HepG2 (cell line): ENCODE measurements at regions of chr6 and their contacts with region 1.

Region 1: GRCh38 chr6:8707956-8708772 is 272.8 kb upstream of the SLC35B3 start:
- DNase-seq: peak; percentile 27
- ATAC-seq: peak; percentile 71
- H3K4me3 ChIP-seq: no peak overlapping the region
- H3K27ac ChIP-seq: no peak overlapping the region
- H3K4me1 ChIP-seq: no peaks in the 10 kb centered on the region
- H3K27me3 ChIP-seq: no peaks in the 10 kb centered on the region; a peak in 1 of 5 replicates
- CTCF ChIP-seq: peak; percentile 46
- EP300 ChIP-seq: no peak
- POLR2A ChIP-seq: no peak
- RAD21 ChIP-seq: no peak

Region 2: GRCh38 chr6:8539446-8539845 is 168.7 kb before region 1 on chr6:
- CTCF ChIA-PET with region 1: no interaction called
- POLR2A ChIA-PET with region 1: no interaction called
- in situ Hi-C with region 1: no loop called
- intact Hi-C with region 1: loop called (anchors 1 kb)
- DNase-seq: peak; percentile 28
- ATAC-seq: peak; percentile 75
- H3K4me3 ChIP-seq: no peak overlapping the region
- H3K27ac ChIP-seq: no peak overlapping the region
- H3K4me1 ChIP-seq: no peaks in the 10 kb centered on the region
- H3K27me3 ChIP-seq: no peaks in the 10 kb centered on the region
- CTCF ChIP-seq: peak; percentile 54
- EP300 ChIP-seq: no peak
- POLR2A ChIP-seq: no peak
- RAD21 ChIP-seq: peak; percentile 66